ENCODE measurements at regions of chr3 and their contacts with region 1.

Region 1: GRCh38 chr3:184029456-184029950 is 2.0 kb upstream of the HTR3D start:
- DNase-seq: no peak
- H3K4me3 ChIP-seq: no peak overlapping the region
- H3K27ac ChIP-seq: no peak overlapping the region
- H3K4me1 ChIP-seq: no peaks in the 10 kb centered on the region
- H3K27me3 ChIP-seq: peaks cover 22% of the 10 kb centered on the region
- CTCF ChIP-seq: no peak

Region 2: GRCh38 chr3:184042617-184043016 is 13.1 kb after region 1 on chr3:
- CTCF ChIA-PET with region 1: no interaction called
- POLR2A ChIA-PET with region 1: interaction called, 10 read pairs
- intact Hi-C with region 1: no loop called
- DNase-seq: no peak
- H3K4me3 ChIP-seq: no peak overlapping the region
- H3K27ac ChIP-seq: no peak overlapping the region
- H3K4me1 ChIP-seq: peaks cover 18% of the 10 kb centered on the region
- H3K27me3 ChIP-seq: peaks cover 9% of the 10 kb centered on the region
- CTCF ChIP-seq: no peak